ENCODE measurements at regions of chr3 and their contacts with region 1.

Region 1: GRCh38 chr3:61864886-61865285 is 303.5 kb downstream of the PTPRG start:
- DNase-seq: no peak
- H3K4me3 ChIP-seq: no peak overlapping the region
- H3K27ac ChIP-seq: no peak overlapping the region
- H3K4me1 ChIP-seq: no peaks in the 10 kb centered on the region
- H3K27me3 ChIP-seq: no peaks in the 10 kb centered on the region
- CTCF ChIP-seq: no peak

Region 2: DNA sequence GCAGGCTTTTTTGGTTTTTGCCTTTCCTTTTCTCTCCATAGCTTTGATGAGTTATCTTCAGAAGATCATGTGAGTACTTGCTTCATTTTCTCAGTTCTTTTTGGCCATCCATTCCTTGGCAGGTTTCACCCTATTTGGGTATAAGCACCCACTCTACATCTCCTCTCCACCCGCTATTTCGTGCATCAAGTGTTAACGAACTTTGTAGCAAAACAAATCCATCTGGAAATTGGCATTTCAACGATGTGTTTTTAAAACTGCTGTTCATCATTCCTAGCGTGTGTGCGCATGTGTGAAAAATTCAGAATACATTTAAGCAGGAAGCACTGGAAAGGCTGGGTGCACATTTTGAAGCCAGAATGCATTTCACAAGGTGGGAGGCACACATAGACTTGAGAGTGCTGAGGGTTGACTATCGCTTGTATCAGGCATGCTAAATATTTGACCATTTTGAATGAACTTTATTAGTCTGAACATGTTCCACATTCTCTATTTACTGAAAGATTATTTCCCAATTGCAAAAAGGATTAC is 523.9 kb before region 1 on chr3:
- CTCF ChIA-PET with region 1: no interaction called
- POLR2A ChIA-PET with region 1: no interaction called
- intact Hi-C with region 1: no loop called
- DNase-seq: no peak
- H3K4me3 ChIP-seq: no peak overlapping the region
- H3K27ac ChIP-seq: no peak overlapping the region
- H3K4me1 ChIP-seq: no peaks in the 10 kb centered on the region
- H3K27me3 ChIP-seq: no peaks in the 10 kb centered on the region
- CTCF ChIP-seq: no peak

Region 3: GRCh38 chr3:61924090-61924735 is 59.3 kb after region 1 on chr3:
- CTCF ChIA-PET with region 1: no interaction called
- POLR2A ChIA-PET with region 1: no interaction called
- intact Hi-C with region 1: no loop called
- DNase-seq: no peak
- H3K4me3 ChIP-seq: no peak overlapping the region
- H3K27ac ChIP-seq: no peak overlapping the region
- H3K4me1 ChIP-seq: no peaks in the 10 kb centered on the region
- H3K27me3 ChIP-seq: no peaks in the 10 kb centered on the region
- CTCF ChIP-seq: no peak

Region 4: DNA sequence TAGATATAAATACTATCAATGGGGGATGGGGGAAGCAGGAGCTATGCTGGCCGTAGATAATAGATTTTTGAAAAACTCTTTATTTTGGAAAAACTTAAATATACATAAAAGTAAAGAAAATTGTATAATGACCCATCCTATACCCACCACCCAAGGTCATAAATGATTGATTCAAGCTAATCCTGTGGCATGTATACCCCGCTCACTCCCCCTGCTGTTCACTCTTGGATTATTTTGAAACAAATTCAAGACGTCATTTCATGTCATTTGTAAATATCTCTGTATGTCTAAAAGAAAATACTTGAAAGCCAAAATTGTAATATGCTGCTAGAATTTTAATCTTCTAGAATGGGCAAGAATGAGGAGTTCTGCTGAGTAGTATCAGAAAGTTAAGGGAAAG is 266.7 kb after region 1 on chr3:
- CTCF ChIA-PET with region 1: no interaction called
- POLR2A ChIA-PET with region 1: no interaction called
- intact Hi-C with region 1: loop called (anchors 10 kb)
- DNase-seq: peak; percentile 11
- H3K4me3 ChIP-seq: no peak overlapping the region
- H3K27ac ChIP-seq: no peak overlapping the region
- H3K4me1 ChIP-seq: no peaks in the 10 kb centered on the region
- H3K27me3 ChIP-seq: no peaks in the 10 kb centered on the region
- CTCF ChIP-seq: peak; percentile 47; the same call in 1 of the 2 replicates

Region 5: GRCh38 chr3:62188681-62189383 is 323.9 kb after region 1 on chr3:
- CTCF ChIA-PET with region 1: interaction called, 4 read pairs
- POLR2A ChIA-PET with region 1: no interaction called
- intact Hi-C with region 1: loop called (anchors 5 kb)
- DNase-seq: peak; percentile 65
- H3K4me3 ChIP-seq: no peak overlapping the region
- H3K27ac ChIP-seq: no peak overlapping the region
- H3K4me1 ChIP-seq: no peaks in the 10 kb centered on the region
- H3K27me3 ChIP-seq: no peaks in the 10 kb centered on the region
- CTCF ChIP-seq: peak; percentile 67

Measured in A673 (cell line).